ENCODE measurements at regions of chr2 and their contacts with region 1.

Region 1: GRCh38 chr2:230913406-230914143 is 11.5 kb downstream of the GPR55 start:
- DNase-seq: peak in 1 of 2 donors; percentile 61
- H3K4me3 ChIP-seq: no peak overlapping the region
- H3K27ac ChIP-seq: no peak overlapping the region
- H3K4me1 ChIP-seq: no peaks in the 10 kb centered on the region
- H3K27me3 ChIP-seq: no peaks in the 10 kb centered on the region
- CTCF ChIP-seq: peak; percentile 24 to 40 (median 31)

Region 2: GRCh38 chr2:230814616-230815015 is 99.0 kb before region 1 on chr2:
- intact Hi-C with region 1: no loop called
- DNase-seq: no peak
- H3K4me3 ChIP-seq: no peak overlapping the region
- H3K27ac ChIP-seq: no peak overlapping the region
- H3K4me1 ChIP-seq: no peaks in the 10 kb centered on the region
- H3K27me3 ChIP-seq: no peaks in the 10 kb centered on the region
- CTCF ChIP-seq: peak in 1 of 3 experiments; percentile 23

Region 3: GRCh38 chr2:230847883-230848388 is 65.6 kb before region 1 on chr2:
- intact Hi-C with region 1: loop called (anchors 5 kb)
- DNase-seq: peak; percentile 52 to 93
- H3K4me3 ChIP-seq: peak overlapping the region in 1 of 2 donors; percentile 36
- H3K27ac ChIP-seq: no peak overlapping the region
- H3K4me1 ChIP-seq: no peaks in the 10 kb centered on the region
- H3K27me3 ChIP-seq: peaks cover 7% of the 10 kb centered on the region
- CTCF ChIP-seq: peak; percentile 74 to 95 (median 84)

Measured in ascending aorta (tissue), 2 donors.